GM12878 (cell line): ENCODE measurements at regions of chr12 and their contacts with region 1.

Region 1: GRCh38 chr12:62799126-62799736 is 135.7 kb downstream of the PPM1H start:
- DNase-seq: no peak
- ATAC-seq: peak; percentile 97
- H3K4me3 ChIP-seq: no peak overlapping the region
- H3K27ac ChIP-seq: no peak overlapping the region
- H3K4me1 ChIP-seq: no peaks in the 10 kb centered on the region; the same call in 1 of the 2 replicates
- H3K27me3 ChIP-seq: no peaks in the 10 kb centered on the region
- CTCF ChIP-seq: peak; percentile 94 to 98 (median 96); a peak in 5 of 6 replicates
- EP300 ChIP-seq: no peak
- POLR2A ChIP-seq: no peak
- RAD21 ChIP-seq: peak; percentile 97

Region 2: DNA sequence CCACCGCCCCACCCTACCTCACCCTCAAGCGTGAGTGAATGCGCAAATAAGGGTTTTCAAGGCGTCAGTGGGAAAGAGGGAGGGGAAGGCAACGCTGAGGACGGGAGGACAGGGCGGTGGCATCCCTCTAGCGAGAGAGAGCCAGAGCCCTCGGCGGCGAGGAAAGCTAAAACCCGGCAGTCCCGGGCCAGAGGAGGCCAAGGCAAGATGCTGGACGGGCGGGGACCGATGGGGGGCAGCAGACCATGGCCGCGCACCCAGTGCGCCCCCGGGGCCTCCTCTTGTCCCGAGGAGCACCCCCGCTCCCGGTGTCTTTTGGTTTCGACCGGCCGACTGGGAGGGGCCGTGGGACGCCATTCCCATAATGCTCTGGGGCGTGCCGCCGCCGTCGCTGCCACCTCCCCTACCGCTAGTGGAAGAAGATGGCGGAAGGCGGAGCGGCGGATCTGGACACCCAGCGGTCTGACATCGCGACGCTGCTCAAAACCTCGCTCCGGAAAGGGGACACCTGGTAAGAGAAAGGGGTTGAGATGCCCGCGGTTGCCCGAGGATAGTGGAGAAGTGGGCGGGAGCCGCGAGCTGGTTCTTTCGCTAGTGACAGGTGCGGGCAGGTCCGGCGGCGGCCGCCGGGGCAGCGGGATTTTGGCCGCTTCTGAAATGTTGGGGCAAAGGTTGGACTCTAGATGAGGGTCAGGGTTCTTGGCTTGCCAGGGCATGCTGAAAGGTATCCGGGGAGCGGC is 539.1 kb before region 1 on chr12 and contains the start of gene USP15:
- CTCF ChIA-PET with region 1: interaction called, 3 read pairs
- POLR2A ChIA-PET with region 1: no interaction called
- RAD21 ChIA-PET with region 1: no interaction called
- SMC1A ChIA-PET with region 1: no interaction called
- in situ Hi-C with region 1: no loop called
- intact Hi-C with region 1: loop called (anchors 10 kb)
- DNase-seq: peak; percentile 73
- ATAC-seq: peak; percentile 85
- H3K4me3 ChIP-seq: peak within 1 kb of the TSS; percentile 99
- H3K27ac ChIP-seq: peak within 1 kb of the TSS; percentile 90
- H3K4me1 ChIP-seq: peaks cover 8% of the 10 kb centered on the region
- H3K27me3 ChIP-seq: no peaks in the 10 kb centered on the region
- CTCF ChIP-seq: peak; percentile 54 to 70 (median 64)
- EP300 ChIP-seq: peak; percentile 15 to 67; a peak in 2 of 4 replicates
- POLR2A ChIP-seq: peak; percentile 96
- RAD21 ChIP-seq: peak; percentile 18; the same call in 1 of the 2 replicates
- polyA plus RNA-seq, gene USP15: 89.1 to 101 TPM

Region 3: DNA sequence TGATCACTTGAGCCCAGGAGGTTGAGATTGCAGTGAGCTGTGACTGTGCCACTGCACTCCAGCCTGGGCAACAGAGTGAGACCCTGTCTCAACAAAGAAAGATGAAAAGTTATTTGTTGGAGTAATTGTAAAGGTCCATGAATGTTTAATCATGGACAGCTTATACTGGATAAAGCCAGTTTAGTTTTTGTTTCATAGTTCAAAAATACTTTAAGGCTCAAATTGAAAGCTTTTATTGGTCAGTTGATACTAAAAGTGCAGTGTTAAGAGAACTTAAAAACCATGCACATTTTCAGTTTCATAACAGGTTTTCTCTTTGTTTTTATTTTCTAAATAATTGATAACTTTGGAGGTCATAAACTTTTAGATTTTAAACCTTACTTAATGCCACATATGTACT is 224.2 kb before region 1 on chr12:
- CTCF ChIA-PET with region 1: interaction called, 314 read pairs
- POLR2A ChIA-PET with region 1: no interaction called
- RAD21 ChIA-PET with region 1: interaction called, 118 read pairs
- SMC1A ChIA-PET with region 1: interaction called, 256 read pairs
- in situ Hi-C with region 1: loop called (anchors 5 kb)
- intact Hi-C with region 1: no loop called
- DNase-seq: no peak
- ATAC-seq: peak; percentile 57
- H3K4me3 ChIP-seq: no peak overlapping the region
- H3K27ac ChIP-seq: peak overlapping the region; percentile 67
- H3K4me1 ChIP-seq: peaks cover 10% of the 10 kb centered on the region
- H3K27me3 ChIP-seq: no peaks in the 10 kb centered on the region
- CTCF ChIP-seq: no peak
- EP300 ChIP-seq: no peak
- POLR2A ChIP-seq: no peak
- RAD21 ChIP-seq: no peak

Region 4: DNA sequence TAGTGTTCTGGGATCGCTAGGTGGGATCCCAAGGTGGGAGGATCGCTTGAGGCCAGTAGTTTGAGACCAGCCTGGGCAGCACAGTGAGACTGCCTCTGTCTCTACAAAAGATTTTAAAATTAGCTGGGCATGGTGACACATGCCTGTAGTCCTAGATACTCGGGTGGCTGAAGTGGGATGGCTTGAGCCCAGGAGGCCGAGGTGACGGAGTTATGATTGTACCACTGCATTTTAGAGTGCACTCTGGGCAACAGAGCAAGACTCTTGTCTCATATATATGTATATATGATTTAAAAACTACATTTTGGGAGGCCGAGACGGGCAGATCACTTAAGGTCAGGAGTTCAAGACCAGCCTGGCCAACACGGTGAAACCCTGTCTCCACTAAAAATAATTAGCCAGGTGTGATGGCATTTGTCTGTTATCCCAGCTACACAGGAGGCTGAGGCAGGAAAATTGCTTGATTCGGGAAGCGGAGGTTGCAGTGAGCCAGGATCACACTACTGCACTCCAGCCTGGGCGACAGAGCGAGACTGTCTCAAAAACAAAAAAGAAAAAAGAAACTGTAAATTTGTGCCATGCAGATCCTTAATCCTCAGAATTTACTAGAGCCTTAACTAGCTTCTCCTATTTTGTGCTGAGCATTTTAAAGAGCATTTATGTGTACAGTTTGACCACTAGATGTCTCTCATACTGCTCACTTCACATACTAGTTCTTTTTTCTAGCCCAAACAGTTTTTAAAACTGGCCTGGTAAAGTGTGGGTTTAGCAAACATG is 217.8 kb before region 1 on chr12:
- CTCF ChIA-PET with region 1: interaction called, 314 read pairs
- POLR2A ChIA-PET with region 1: interaction called, 3 read pairs
- RAD21 ChIA-PET with region 1: interaction called, 118 read pairs
- SMC1A ChIA-PET with region 1: interaction called, 256 read pairs
- in situ Hi-C with region 1: loop called (anchors 5 kb)
- intact Hi-C with region 1: loop called (anchors 1 kb)
- DNase-seq: no peak
- ATAC-seq: peak; percentile 87
- H3K4me3 ChIP-seq: no peak overlapping the region
- H3K27ac ChIP-seq: no peak overlapping the region
- H3K4me1 ChIP-seq: no peaks in the 10 kb centered on the region
- H3K27me3 ChIP-seq: no peaks in the 10 kb centered on the region
- CTCF ChIP-seq: peak; percentile 49 to 66 (median 65); a peak in 4 of 6 replicates
- EP300 ChIP-seq: no peak
- POLR2A ChIP-seq: no peak
- RAD21 ChIP-seq: peak; percentile 81

Region 5: GRCh38 chr12:62783881-62784280 is 15.3 kb before region 1 on chr12:
- CTCF ChIA-PET with region 1: interaction called, 79 read pairs
- POLR2A ChIA-PET with region 1: no interaction called
- RAD21 ChIA-PET with region 1: interaction called, 5 read pairs
- SMC1A ChIA-PET with region 1: interaction called, 14 read pairs
- in situ Hi-C with region 1: no loop called
- intact Hi-C with region 1: no loop called
- DNase-seq: no peak
- ATAC-seq: no peak
- H3K4me3 ChIP-seq: no peak overlapping the region
- H3K27ac ChIP-seq: no peak overlapping the region
- H3K4me1 ChIP-seq: no peaks in the 10 kb centered on the region; the same call in 1 of the 2 replicates
- H3K27me3 ChIP-seq: no peaks in the 10 kb centered on the region
- CTCF ChIP-seq: no peak
- EP300 ChIP-seq: no peak
- POLR2A ChIP-seq: no peak
- RAD21 ChIP-seq: no peak

Region 6: DNA sequence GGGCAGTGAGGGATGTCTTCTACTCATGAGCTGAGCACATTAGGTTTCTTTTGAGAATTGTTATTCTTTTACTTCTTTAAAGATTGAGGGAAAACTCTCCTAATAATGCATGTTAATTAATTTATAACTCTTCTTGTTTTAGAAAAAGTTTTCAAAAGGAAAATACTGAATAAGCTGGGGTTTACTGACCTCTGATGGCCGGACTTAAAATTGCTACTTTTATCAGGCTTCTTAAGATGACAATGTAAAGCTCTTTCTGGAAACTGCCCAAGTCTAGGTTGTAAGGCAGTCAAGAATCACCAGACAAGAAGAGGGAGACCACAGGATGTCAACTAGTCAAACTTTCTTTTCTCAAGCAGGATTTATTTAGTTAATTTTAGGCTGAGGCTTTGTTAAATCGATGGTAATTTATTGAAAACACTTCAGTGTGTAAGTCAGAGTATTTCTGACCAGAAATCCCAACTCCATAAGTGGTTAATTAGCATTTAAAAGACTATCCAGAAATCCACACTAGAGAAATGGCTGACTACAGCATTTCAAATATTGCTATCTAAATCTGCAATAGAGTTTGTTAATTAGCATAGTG is 269.7 kb after region 1 on chr12:
- CTCF ChIA-PET with region 1: interaction called, 12 read pairs
- POLR2A ChIA-PET with region 1: no interaction called
- RAD21 ChIA-PET with region 1: interaction called, 6 read pairs
- SMC1A ChIA-PET with region 1: interaction called, 4 read pairs
- in situ Hi-C with region 1: no loop called
- intact Hi-C with region 1: no loop called
- DNase-seq: no peak
- ATAC-seq: peak; percentile 55; the same call in 2 of the 3 replicates
- H3K4me3 ChIP-seq: no peak overlapping the region
- H3K27ac ChIP-seq: no peak overlapping the region
- H3K4me1 ChIP-seq: no peaks in the 10 kb centered on the region
- H3K27me3 ChIP-seq: no peaks in the 10 kb centered on the region
- CTCF ChIP-seq: peak; percentile 33 to 48 (median 36); a peak in 3 of 6 replicates
- EP300 ChIP-seq: no peak
- POLR2A ChIP-seq: no peak
- RAD21 ChIP-seq: peak; percentile 59; the same call in 1 of the 2 replicates